SK-N-SH (cell line): ENCODE measurements at regions of chr21 and their contacts with region 1.

Region 1: GRCh38 chr21:21232320-21232719 is 234.1 kb downstream of the NCAM2 start:
- DNase-seq: peak; percentile 10
- H3K4me3 ChIP-seq: no peak overlapping the region; a peak in 1 of 4 replicates
- H3K27ac ChIP-seq: no peak overlapping the region
- H3K4me1 ChIP-seq: peaks cover 0 to 16% of the 10 kb centered on the region in 2 experiments; a peak in 2 of 4 replicates
- H3K27me3 ChIP-seq: no peaks in the 10 kb centered on the region
- CTCF ChIP-seq: peak; percentile 76
- EP300 ChIP-seq: no peak
- RAD21 ChIP-seq: peak; percentile 97

Region 2: GRCh38 chr21:21373969-21374368 is 141.6 kb after region 1 on chr21:
- CTCF ChIA-PET with region 1: interaction called, 17 read pairs
- POLR2A ChIA-PET with region 1: no interaction called
- DNase-seq: no peak
- H3K4me3 ChIP-seq: no peak overlapping the region
- H3K27ac ChIP-seq: no peak overlapping the region
- H3K4me1 ChIP-seq: no peaks in the 10 kb centered on the region; a peak in 1 of 4 replicates
- H3K27me3 ChIP-seq: no peaks in the 10 kb centered on the region
- CTCF ChIP-seq: peak; percentile 53
- EP300 ChIP-seq: no peak
- RAD21 ChIP-seq: peak; percentile 69

Region 3: GRCh38 chr21:21921421-21922232 is 689.3 kb after region 1 on chr21:
- CTCF ChIA-PET with region 1: interaction called, 22 read pairs
- POLR2A ChIA-PET with region 1: no interaction called
- DNase-seq: peak; percentile 16
- H3K4me3 ChIP-seq: no peak overlapping the region; a peak in 1 of 4 replicates
- H3K27ac ChIP-seq: no peak overlapping the region
- H3K4me1 ChIP-seq: peaks cover 0 to 4% of the 10 kb centered on the region in 2 experiments; a peak in 2 of 4 replicates
- H3K27me3 ChIP-seq: no peaks in the 10 kb centered on the region
- CTCF ChIP-seq: peak; percentile 88
- EP300 ChIP-seq: no peak; a peak in 1 of 4 replicates
- RAD21 ChIP-seq: peak; percentile 88

Region 4: DNA sequence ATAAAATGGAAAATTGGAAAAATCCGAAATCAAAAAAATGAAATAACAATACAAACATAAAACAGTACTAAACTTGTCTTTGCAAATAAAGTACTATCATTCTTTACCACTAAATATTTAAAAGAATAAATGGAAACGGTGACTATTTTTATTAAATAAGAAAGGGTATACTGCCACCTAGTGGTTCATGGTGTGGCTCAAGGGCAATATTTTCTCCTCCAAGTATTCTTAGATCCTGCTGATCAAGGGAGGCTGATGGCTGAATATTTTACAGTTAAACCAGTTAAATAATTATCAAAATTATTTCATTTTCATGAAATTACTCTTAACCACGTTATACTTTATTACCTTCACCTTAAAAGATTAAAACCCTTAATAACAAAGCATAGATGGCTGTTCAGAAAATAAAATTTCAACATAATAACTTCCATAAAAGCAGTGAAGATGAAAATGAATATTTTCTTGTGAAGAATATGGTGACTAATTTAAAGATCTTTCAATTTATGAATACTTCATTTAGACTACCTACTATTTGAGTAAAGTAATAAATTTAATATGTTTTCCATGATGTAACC is 1559.8 kb after region 1 on chr21:
- CTCF ChIA-PET with region 1: interaction called, 19 read pairs
- POLR2A ChIA-PET with region 1: no interaction called
- DNase-seq: peak; percentile 60
- H3K4me3 ChIP-seq: no peak overlapping the region; a peak in 1 of 4 replicates
- H3K27ac ChIP-seq: no peak overlapping the region
- H3K4me1 ChIP-seq: peaks cover 0 to 5% of the 10 kb centered on the region in 2 experiments; a peak in 1 of 4 replicates
- H3K27me3 ChIP-seq: no peaks in the 10 kb centered on the region
- CTCF ChIP-seq: peak; percentile 89
- EP300 ChIP-seq: no peak
- RAD21 ChIP-seq: peak; percentile 82